ENCODE measurements at regions of chr4 and their contacts with region 1.

Region 1: GRCh38 chr4:39977489-39978377 is at the start of gene PDS5A:
- DNase-seq: peak; percentile 72
- ATAC-seq: peak; percentile 85
- H3K4me3 ChIP-seq: peak within 1 kb of the TSS; percentile 87 to 92
- H3K27ac ChIP-seq: peak within 1 kb of the TSS; percentile 92
- H3K4me1 ChIP-seq: peaks cover 8 to 15% of the 10 kb centered on the region in 2 experiments
- H3K27me3 ChIP-seq: no peaks in the 10 kb centered on the region
- CTCF ChIP-seq: peak; percentile 65 to 92 (median 89)
- POLR2A ChIP-seq: peak; percentile 77
- RAD21 ChIP-seq: no peak; the same call in none of the 2 replicates
- total RNA-seq, gene PDS5A: 98.3 TPM

Region 2: DNA sequence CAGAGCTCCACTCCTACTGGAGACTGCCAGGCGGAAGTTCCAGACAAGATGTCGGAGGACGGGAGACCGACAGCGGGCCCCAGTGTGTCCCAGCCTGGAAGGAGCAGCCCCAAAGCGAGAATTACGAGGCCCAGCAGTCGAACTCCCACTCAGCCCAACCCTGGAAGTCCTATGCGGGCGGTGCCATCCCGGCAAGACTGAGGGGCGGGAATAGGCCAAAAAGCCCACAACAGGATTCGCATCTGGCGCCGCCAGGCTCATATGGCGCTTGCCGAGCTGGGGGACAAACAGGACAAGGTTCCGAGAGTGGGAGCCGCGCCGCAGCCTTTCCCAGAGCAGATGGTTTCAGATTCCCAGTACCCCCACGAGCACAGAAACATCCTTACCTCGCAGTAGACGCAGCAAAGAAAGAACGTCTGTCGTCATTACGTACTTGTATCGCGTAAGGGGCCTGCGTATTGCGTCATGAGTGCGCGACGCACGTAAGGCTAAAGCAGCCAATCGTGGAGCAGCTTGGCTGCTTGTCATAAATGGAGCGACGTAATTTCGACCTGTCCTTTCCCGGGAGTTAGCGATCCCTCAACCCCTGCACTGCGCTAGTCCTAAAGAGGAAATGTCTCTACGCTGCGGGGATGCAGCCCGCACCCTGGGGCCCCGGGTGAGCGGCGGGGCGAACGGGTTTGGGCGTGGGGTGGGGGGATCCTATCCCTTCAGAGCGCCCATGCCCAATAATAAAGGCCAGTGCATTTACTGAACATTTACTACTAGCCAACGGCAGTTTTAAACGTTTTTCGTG is 519.0 kb before region 1 on chr4 and contains the starts of genes LIAS and RPL9:
- CTCF ChIA-PET with region 1: no interaction called
- POLR2A ChIA-PET with region 1: no interaction called
- RAD21 ChIA-PET with region 1: no interaction called
- intact Hi-C with region 1: loop called (anchors 2 kb)
- DNase-seq: peak; percentile 99
- ATAC-seq: peak; percentile 90
- H3K4me3 ChIP-seq: peak within 1 kb of the TSS; percentile 88 to 97
- H3K27ac ChIP-seq: peak within 1 kb of the TSS; percentile 97
- H3K4me1 ChIP-seq: peaks cover 5 to 21% of the 10 kb centered on the region in 2 experiments; a peak in 3 of 4 replicates
- H3K27me3 ChIP-seq: no peaks in the 10 kb centered on the region
- CTCF ChIP-seq: no peak
- POLR2A ChIP-seq: peak; percentile 97
- RAD21 ChIP-seq: no peak
- total RNA-seq, gene LIAS: 23.5 TPM
- total RNA-seq, gene RPL9: 1,657 TPM

Region 3: DNA sequence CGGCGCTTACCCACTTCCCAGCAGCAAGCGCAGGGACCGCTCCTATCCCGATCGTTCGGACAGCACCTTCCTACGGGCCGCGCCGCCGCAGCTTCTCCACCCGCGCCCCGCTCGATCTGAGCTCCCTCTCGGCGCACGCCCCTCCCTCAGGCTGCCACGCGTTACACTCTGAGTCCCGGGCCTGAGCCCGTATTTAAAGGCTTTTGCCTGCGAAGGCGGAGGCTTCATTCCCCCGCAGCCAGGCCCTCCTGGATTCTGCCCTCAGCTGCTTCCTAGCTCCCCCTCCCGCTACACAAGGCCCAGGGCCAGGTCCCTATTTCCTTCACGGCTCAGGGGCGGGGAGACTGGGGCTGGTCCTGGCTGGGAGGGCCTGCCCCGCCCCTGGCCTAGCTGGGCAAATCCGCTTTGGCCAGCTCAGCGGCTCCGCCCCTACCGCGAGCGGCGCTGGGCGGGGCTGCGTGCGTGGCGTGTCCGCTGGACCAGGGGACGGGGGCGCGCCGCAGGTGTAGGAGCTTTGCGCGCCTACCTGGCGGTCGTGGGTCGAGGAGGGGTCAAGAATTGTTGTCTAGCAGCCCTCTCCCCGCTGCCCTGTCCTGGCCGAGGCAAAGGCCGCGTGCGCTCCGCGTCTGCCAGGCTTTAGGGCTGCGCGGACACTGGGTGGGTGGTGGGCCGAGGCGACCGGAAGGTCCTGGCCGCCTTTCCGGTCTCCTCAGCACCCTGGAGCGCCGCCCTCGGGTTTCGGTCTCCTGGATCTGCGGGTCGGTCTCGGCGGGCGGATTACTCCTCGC is 450.3 kb before region 1 on chr4 and contains the start of gene UGDH:
- CTCF ChIA-PET with region 1: no interaction called
- POLR2A ChIA-PET with region 1: interaction called, 3 read pairs
- RAD21 ChIA-PET with region 1: no interaction called
- intact Hi-C with region 1: loop called (anchors 2 kb)
- DNase-seq: peak; percentile 91
- ATAC-seq: peak; percentile 95
- H3K4me3 ChIP-seq: peak within 1 kb of the TSS; percentile 91 to 93
- H3K27ac ChIP-seq: peak within 1 kb of the TSS; percentile 91
- H3K4me1 ChIP-seq: peaks cover 7 to 27% of the 10 kb centered on the region in 2 experiments; a peak in 3 of 4 replicates
- H3K27me3 ChIP-seq: no peaks in the 10 kb centered on the region
- CTCF ChIP-seq: no peak
- POLR2A ChIP-seq: peak; percentile 48
- RAD21 ChIP-seq: peak; percentile 11; the same call in 1 of the 2 replicates
- total RNA-seq, gene UGDH: 67.9 TPM

Region 4: GRCh38 chr4:39638354-39639240 is 339.1 kb before region 1 on chr4 and contains the start of gene SMIM14:
- CTCF ChIA-PET with region 1: no interaction called
- POLR2A ChIA-PET with region 1: no interaction called
- RAD21 ChIA-PET with region 1: no interaction called
- intact Hi-C with region 1: loop called (anchors 5 kb)
- DNase-seq: peak; percentile 93
- ATAC-seq: peak; percentile 93
- H3K4me3 ChIP-seq: peak within 1 kb of the TSS; percentile 90 to 91
- H3K27ac ChIP-seq: peak within 1 kb of the TSS; percentile 72
- H3K4me1 ChIP-seq: peaks cover 16 to 28% of the 10 kb centered on the region in 2 experiments
- H3K27me3 ChIP-seq: no peaks in the 10 kb centered on the region
- CTCF ChIP-seq: no peak
- POLR2A ChIP-seq: peak; percentile 82
- RAD21 ChIP-seq: peak; percentile 6; the same call in 1 of the 2 replicates
- total RNA-seq, gene SMIM14: 21.6 TPM

Region 5: GRCh38 chr4:39697740-39698423 is 279.9 kb before region 1 on chr4 and contains the start of gene UBE2K:
- CTCF ChIA-PET with region 1: no interaction called
- POLR2A ChIA-PET with region 1: no interaction called
- RAD21 ChIA-PET with region 1: no interaction called
- intact Hi-C with region 1: loop called (anchors 2 kb)
- DNase-seq: peak; percentile 71
- ATAC-seq: peak; percentile 94
- H3K4me3 ChIP-seq: peak within 1 kb of the TSS; percentile 66 to 98
- H3K27ac ChIP-seq: peak within 1 kb of the TSS; percentile 88
- H3K4me1 ChIP-seq: peaks cover 11 to 36% of the 10 kb centered on the region in 2 experiments
- H3K27me3 ChIP-seq: no peaks in the 10 kb centered on the region
- CTCF ChIP-seq: no peak
- POLR2A ChIP-seq: peak; percentile 89
- RAD21 ChIP-seq: no peak
- total RNA-seq, gene UBE2K: 126 TPM

Region 6: DNA sequence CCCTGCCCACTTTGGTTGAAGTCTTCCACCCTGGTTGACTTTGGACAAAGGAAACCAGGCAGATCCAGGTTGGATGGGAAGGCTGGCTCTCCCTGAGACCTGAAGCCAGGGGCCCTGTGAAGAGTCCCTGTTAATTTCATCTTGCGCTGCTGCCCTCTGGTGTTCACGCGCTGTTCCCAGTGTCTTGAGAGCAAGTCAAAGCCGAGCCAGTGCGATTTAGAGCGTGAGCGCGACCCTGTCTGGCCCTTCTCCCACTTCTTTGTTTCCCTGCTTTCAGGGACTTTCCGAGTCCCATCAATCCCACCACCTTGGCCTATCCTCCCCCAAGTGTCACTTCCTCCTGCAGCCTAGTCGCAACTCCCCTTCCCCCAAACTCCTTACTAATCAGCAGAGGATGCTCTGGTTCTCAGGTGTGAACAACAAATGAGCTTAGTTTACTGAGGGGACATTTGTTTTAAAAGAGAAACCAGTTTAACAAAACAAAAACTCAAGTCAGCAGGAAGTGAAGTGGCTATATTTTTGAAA is 331.6 kb after region 1 on chr4:
- CTCF ChIA-PET with region 1: no interaction called
- POLR2A ChIA-PET with region 1: no interaction called
- RAD21 ChIA-PET with region 1: no interaction called
- intact Hi-C with region 1: loop called (anchors 5 kb)
- DNase-seq: peak; percentile 77
- ATAC-seq: peak; percentile 99
- H3K4me3 ChIP-seq: peak overlapping the region; percentile 11 to 37; a peak in 2 of 4 replicates
- H3K27ac ChIP-seq: no peak overlapping the region
- H3K4me1 ChIP-seq: peaks cover 0 to 8% of the 10 kb centered on the region in 2 experiments; a peak in 2 of 4 replicates
- H3K27me3 ChIP-seq: no peaks in the 10 kb centered on the region
- CTCF ChIP-seq: peak; percentile 87 to 91 (median 88)
- POLR2A ChIP-seq: no peak
- RAD21 ChIP-seq: peak; percentile 92

Measured in HCT116 (cell line).